ENCODE measurements at regions of chr17 and their contacts with region 1.

Region 1: GRCh38 chr17:79844869-79845600 is 5.8 kb upstream of the CBX4 start:
- DNase-seq: peak; percentile 98
- H3K4me3 ChIP-seq: peak overlapping the region in 1 of 2 experiments; percentile 15; a peak in 1 of 4 replicates
- H3K27ac ChIP-seq: no peak overlapping the region
- H3K4me1 ChIP-seq: peaks cover 10 to 59% of the 10 kb centered on the region in 2 experiments; a peak in 3 of 4 replicates
- H3K27me3 ChIP-seq: peaks cover 35% of the 10 kb centered on the region
- CTCF ChIP-seq: peak; percentile 65
- EP300 ChIP-seq: no peak
- RAD21 ChIP-seq: peak; percentile 64

Region 2: GRCh38 chr17:79818026-79818758 is 26.8 kb before region 1 on chr17:
- CTCF ChIA-PET with region 1: interaction called, 274 read pairs
- POLR2A ChIA-PET with region 1: interaction called, 93 read pairs
- DNase-seq: no peak
- H3K4me3 ChIP-seq: no peak overlapping the region
- H3K27ac ChIP-seq: no peak overlapping the region
- H3K4me1 ChIP-seq: peaks cover 0 to 9% of the 10 kb centered on the region in 2 experiments; a peak in 1 of 4 replicates
- H3K27me3 ChIP-seq: no peaks in the 10 kb centered on the region
- CTCF ChIP-seq: no peak
- EP300 ChIP-seq: no peak
- RAD21 ChIP-seq: no peak

Region 3: GRCh38 chr17:79859676-79860615 is 14.9 kb after region 1 on chr17:
- CTCF ChIA-PET with region 1: interaction called, 42 read pairs
- POLR2A ChIA-PET with region 1: interaction called, 4 read pairs
- DNase-seq: no peak
- H3K4me3 ChIP-seq: no peak overlapping the region
- H3K27ac ChIP-seq: no peak overlapping the region
- H3K4me1 ChIP-seq: no peaks in the 10 kb centered on the region; a peak in 1 of 4 replicates
- H3K27me3 ChIP-seq: peaks cover 32% of the 10 kb centered on the region
- CTCF ChIP-seq: no peak
- EP300 ChIP-seq: no peak
- RAD21 ChIP-seq: no peak

Region 4: DNA sequence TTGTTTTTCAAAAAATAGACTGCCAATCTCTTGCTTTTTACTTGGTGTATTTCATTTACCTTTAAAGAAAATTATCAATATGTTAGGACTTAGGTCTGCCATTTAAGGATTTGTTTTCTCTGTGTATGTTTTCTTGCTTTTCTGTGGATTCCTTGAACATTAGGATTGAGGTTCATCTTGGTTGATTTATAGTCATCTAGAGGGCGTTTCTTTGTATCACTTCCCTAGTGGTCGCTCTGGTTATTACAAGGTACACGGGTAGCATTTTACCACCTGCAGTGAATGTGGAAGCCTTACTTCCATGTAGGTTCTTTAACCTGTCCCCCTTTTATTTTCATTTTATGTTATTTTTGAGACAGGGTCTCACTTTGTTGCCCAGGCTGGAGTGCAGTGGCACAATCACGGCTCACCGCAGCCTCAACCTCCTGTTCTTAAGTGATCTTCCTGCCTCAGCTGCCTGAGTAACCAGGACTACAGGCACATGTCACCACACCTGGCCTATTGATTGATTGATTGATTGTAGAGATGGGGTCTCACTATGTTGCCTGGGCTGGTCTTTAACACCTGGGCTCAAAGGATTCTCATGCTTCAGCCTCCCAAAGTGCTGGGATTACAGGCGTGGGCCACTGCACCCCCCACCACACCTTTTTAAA is 29.4 kb after region 1 on chr17:
- CTCF ChIA-PET with region 1: interaction called, 34 read pairs
- POLR2A ChIA-PET with region 1: no interaction called
- DNase-seq: peak; percentile 80
- H3K4me3 ChIP-seq: no peak overlapping the region
- H3K27ac ChIP-seq: no peak overlapping the region
- H3K4me1 ChIP-seq: no peaks in the 10 kb centered on the region
- H3K27me3 ChIP-seq: no peaks in the 10 kb centered on the region; the same call in 1 of the 2 replicates
- CTCF ChIP-seq: peak; percentile 69
- EP300 ChIP-seq: no peak
- RAD21 ChIP-seq: peak; percentile 43

Region 5: GRCh38 chr17:79930877-79931816 is 86.1 kb after region 1 on chr17:
- CTCF ChIA-PET with region 1: interaction called, 182 read pairs
- POLR2A ChIA-PET with region 1: interaction called, 3 read pairs
- DNase-seq: no peak
- H3K4me3 ChIP-seq: peak overlapping the region; percentile 60 to 70; a peak in 2 of 4 replicates
- H3K27ac ChIP-seq: no peak overlapping the region
- H3K4me1 ChIP-seq: peaks cover 6 to 24% of the 10 kb centered on the region in 2 experiments; a peak in 2 of 4 replicates
- H3K27me3 ChIP-seq: no peaks in the 10 kb centered on the region
- CTCF ChIP-seq: no peak
- EP300 ChIP-seq: no peak
- RAD21 ChIP-seq: no peak

Region 6: GRCh38 chr17:79970576-79971068 is 125.6 kb after region 1 on chr17:
- CTCF ChIA-PET with region 1: interaction called, 17 read pairs
- POLR2A ChIA-PET with region 1: no interaction called
- DNase-seq: peak; percentile 33
- H3K4me3 ChIP-seq: no peak overlapping the region
- H3K27ac ChIP-seq: no peak overlapping the region
- H3K4me1 ChIP-seq: no peaks in the 10 kb centered on the region; a peak in 1 of 4 replicates
- H3K27me3 ChIP-seq: no peaks in the 10 kb centered on the region
- CTCF ChIP-seq: 0 out of 2 replicates have a peak, but pooled peaks have one; percentile 48
- EP300 ChIP-seq: no peak
- RAD21 ChIP-seq: peak; percentile 60

Region 7: DNA sequence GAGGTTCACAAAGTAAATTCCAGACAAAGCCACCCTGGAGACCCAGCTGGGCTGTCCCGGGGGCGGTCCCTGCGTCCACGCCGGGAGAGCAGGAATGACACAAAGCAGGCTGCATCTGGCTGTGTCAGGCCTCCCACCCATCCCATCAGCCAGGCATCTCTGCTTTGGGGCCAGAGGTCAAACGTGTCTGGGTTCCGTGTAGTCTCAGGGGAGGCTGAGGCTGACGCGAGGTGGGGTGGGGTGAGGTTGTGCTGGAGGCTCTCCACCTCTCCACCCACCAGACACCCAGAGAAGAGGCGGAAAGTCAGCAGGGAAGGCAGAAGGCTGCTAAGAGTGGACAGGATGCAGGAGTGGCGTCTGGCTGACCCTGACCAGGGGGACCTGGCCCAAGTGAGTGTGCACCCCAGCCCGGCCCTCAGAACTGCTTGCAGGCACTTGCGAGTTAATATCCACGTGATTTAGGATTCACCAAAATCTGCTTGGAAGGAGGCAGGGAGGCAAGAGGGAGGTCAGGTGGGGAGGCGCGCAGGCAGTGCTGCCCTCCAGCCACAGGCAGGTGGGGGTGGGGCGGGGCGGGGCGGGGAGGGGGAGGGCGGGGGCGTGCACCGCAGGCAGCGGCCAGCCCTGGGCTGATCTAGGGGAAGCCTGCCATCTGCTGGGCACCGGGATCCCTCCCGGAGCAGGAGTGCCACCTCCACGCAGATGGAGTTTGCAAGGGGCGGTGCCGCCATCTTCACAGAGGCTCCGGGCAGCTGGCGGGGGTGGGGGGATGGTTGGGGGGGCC is 146.3 kb after region 1 on chr17:
- CTCF ChIA-PET with region 1: interaction called, 90 read pairs
- POLR2A ChIA-PET with region 1: no interaction called
- DNase-seq: peak; percentile 100
- H3K4me3 ChIP-seq: no peak overlapping the region
- H3K27ac ChIP-seq: no peak overlapping the region; a peak in 1 of 4 replicates
- H3K4me1 ChIP-seq: peaks cover 21 to 40% of the 10 kb centered on the region in 2 experiments; a peak in 3 of 4 replicates
- H3K27me3 ChIP-seq: no peaks in the 10 kb centered on the region
- CTCF ChIP-seq: peak; percentile 46
- EP300 ChIP-seq: no peak
- RAD21 ChIP-seq: peak; percentile 78

Region 8: GRCh38 chr17:80284631-80285030 is 439.6 kb after region 1 on chr17:
- CTCF ChIA-PET with region 1: no interaction called
- POLR2A ChIA-PET with region 1: no interaction called
- DNase-seq: peak; percentile 52
- H3K4me3 ChIP-seq: no peak overlapping the region
- H3K27ac ChIP-seq: no peak overlapping the region
- H3K4me1 ChIP-seq: peaks cover 0 to 7% of the 10 kb centered on the region in 2 experiments; a peak in 1 of 4 replicates
- H3K27me3 ChIP-seq: no peaks in the 10 kb centered on the region
- CTCF ChIP-seq: peak; percentile 28
- EP300 ChIP-seq: no peak
- RAD21 ChIP-seq: no peak

Measured in SK-N-SH (cell line).